ENCODE measurements at regions of chr7 and their contacts with region 1.

Region 1: GRCh38 chr7:100221231-100221718 is 1.5 kb downstream of the PVRIG start:
- DNase-seq: no peak
- H3K4me3 ChIP-seq: no peak overlapping the region
- H3K27ac ChIP-seq: no peak overlapping the region
- H3K27me3 ChIP-seq: no peaks in the 10 kb centered on the region
- CTCF ChIP-seq: no peak

Region 2: DNA sequence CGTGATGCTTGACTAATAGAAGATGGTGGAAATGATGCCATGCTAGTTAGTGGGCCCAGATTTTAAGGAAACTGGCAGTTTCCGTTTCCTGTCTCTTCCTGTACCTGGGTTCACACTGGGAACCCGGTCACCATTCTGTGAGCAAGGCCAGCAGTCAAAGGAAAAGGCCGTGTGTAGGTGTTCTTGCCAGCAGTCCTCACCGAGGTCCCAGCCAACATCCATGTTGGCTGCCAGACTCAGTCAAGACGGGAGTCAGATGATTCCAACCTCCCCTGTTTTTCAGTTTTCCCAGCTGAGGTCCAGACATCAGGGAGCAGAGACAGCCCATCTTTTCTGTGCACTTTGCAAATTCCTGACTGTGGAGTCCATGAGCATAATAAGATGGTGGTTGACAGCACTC is 121.5 kb after region 1 on chr7:
- CTCF ChIA-PET with region 1: interaction called, 11 read pairs
- POLR2A ChIA-PET with region 1: no interaction called
- DNase-seq: no peak
- H3K4me3 ChIP-seq: no peak overlapping the region
- H3K27ac ChIP-seq: no peak overlapping the region
- H3K27me3 ChIP-seq: no peaks in the 10 kb centered on the region
- CTCF ChIP-seq: no peak

Measured in AG04450 (cell line).